ENCODE measurements at regions of chrX and their contacts with region 1.

Region 1: GRCh38 chrX:132022967-132023895 is at the start of gene STK26:
- DNase-seq: peak; percentile 82
- H3K4me3 ChIP-seq: peak within 1 kb of the TSS; percentile 98
- H3K27ac ChIP-seq: peak within 1 kb of the TSS; percentile 84
- H3K4me1 ChIP-seq: peaks cover 24% of the 10 kb centered on the region
- CTCF ChIP-seq: no peak
- total RNA-seq, gene STK26: 25.4 and 28.8 TPM in 2 replicates

Region 2: DNA sequence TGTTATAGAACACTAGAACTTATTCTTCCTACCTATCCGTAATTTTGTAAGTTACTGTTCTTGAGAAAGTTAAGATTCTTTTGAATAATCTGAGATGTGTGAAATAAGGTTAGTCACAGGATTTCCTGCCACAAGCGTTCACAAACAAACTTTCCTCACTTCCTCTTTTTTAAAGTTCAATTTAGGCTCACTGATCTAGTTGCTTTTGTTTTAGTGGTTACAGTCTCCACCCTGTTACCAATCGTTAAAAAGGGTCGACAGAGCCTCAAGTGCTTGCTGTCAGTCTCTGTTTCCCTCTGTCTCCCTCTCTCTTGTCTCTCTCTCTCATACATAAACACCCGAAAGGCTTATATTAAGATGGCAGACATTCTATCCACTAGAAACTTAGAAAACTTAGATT is 36.0 kb before region 1 on chrX:
- CTCF ChIA-PET with region 1: no interaction called
- POLR2A ChIA-PET with region 1: no interaction called
- intact Hi-C with region 1: loop called (anchors 1 kb)
- DNase-seq: peak; percentile 82
- H3K4me3 ChIP-seq: peak overlapping the region; percentile 31
- H3K27ac ChIP-seq: peak overlapping the region; percentile 71
- H3K4me1 ChIP-seq: peaks cover 20% of the 10 kb centered on the region
- CTCF ChIP-seq: no peak

Region 3: DNA sequence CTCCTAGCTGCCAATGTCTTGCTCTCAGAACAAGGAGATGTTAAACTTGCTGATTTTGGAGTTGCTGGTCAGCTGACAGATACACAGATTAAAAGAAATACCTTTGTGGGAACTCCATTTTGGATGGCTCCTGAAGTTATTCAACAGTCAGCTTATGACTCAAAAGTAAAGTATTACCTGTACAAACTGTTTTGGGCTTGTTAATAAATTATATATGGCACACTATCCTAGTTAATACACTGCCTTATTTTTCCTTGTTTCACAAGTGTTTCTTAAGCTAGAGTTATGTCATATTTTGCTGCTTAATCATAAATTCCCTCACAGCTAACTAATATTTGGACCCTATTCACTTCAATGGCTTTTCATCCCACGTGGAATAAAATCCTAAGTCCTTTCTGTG is 45.2 kb after region 1 on chrX:
- CTCF ChIA-PET with region 1: no interaction called
- POLR2A ChIA-PET with region 1: interaction called, 6 read pairs
- intact Hi-C with region 1: loop called (anchors 5 kb)
- DNase-seq: no peak
- H3K4me3 ChIP-seq: no peak overlapping the region
- H3K27ac ChIP-seq: no peak overlapping the region
- H3K4me1 ChIP-seq: no peaks in the 10 kb centered on the region
- CTCF ChIP-seq: no peak

Region 4: DNA sequence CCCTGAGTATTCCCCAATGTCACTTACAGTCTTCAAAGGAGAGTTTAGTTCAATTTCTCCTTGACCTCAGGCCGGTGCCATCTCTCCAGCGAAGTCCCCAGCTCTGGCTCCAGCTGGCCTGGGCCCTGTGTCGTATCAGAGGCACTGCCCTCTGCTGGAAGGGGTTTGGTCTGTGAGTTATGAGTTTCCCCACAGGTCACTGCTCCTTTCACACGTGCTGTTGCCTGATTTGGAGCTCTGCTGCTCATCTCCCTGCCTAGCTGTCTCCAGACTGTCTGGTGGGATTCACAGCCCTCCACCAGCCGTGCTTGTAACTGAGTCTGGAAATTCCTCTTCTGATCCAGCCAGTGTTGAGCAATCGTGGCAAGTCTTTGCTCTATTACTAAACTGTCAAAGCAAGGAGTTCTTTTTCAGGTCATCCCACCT is 196.1 kb after region 1 on chrX and contains the start of gene RAP2C:
- CTCF ChIA-PET with region 1: no interaction called
- POLR2A ChIA-PET with region 1: no interaction called
- intact Hi-C with region 1: loop called (anchors 2 kb)
- DNase-seq: peak; percentile 76
- H3K4me3 ChIP-seq: peak within 1 kb of the TSS; percentile 78
- H3K27ac ChIP-seq: peak within 1 kb of the TSS; percentile 66
- H3K4me1 ChIP-seq: peaks cover 15% of the 10 kb centered on the region
- CTCF ChIP-seq: peak; percentile 67
- total RNA-seq, gene RAP2C: 9.0 and 13.8 TPM in 2 replicates

Region 5: DNA sequence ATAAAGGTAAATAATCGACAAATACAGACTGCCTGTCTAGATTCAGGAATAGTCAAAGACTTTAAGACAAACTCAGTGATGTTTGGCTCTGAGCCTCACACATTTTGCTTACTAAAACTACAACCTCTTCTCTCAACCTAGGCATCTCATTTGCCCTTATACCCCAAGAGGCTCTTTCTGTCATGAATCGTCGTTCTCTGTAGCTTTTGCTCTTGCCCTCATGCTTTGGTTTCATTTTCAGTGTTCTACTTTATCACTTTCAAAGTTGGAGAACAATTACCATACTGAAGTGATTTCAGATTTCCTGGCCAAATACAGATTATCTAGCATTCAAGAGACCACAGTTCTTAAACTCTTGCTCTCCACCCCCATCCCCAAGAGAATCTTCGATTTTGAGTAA is 310.1 kb after region 1 on chrX:
- CTCF ChIA-PET with region 1: no interaction called
- POLR2A ChIA-PET with region 1: no interaction called
- intact Hi-C with region 1: no loop called
- DNase-seq: no peak
- H3K4me3 ChIP-seq: no peak overlapping the region
- H3K27ac ChIP-seq: no peak overlapping the region
- H3K4me1 ChIP-seq: no peaks in the 10 kb centered on the region
- CTCF ChIP-seq: no peak

Region 6: GRCh38 chrX:132488819-132489577 is 465.8 kb after region 1 on chrX and contains the start of gene MBNL3:
- CTCF ChIA-PET with region 1: no interaction called
- POLR2A ChIA-PET with region 1: no interaction called
- intact Hi-C with region 1: loop called (anchors 2 kb)
- DNase-seq: peak; percentile 90
- H3K4me3 ChIP-seq: peak within 1 kb of the TSS; percentile 78
- H3K27ac ChIP-seq: peak within 1 kb of the TSS; percentile 100
- H3K4me1 ChIP-seq: peaks cover 35% of the 10 kb centered on the region
- CTCF ChIP-seq: no peak
- total RNA-seq, gene MBNL3: 31.4 and 39.4 TPM in 2 replicates

Region 7: GRCh38 chrX:133045986-133046385 is 1022.8 kb after region 1 on chrX:
- CTCF ChIA-PET with region 1: no interaction called
- POLR2A ChIA-PET with region 1: no interaction called
- intact Hi-C with region 1: no loop called
- DNase-seq: no peak
- H3K4me3 ChIP-seq: no peak overlapping the region
- H3K27ac ChIP-seq: no peak overlapping the region
- H3K4me1 ChIP-seq: no peaks in the 10 kb centered on the region
- CTCF ChIP-seq: 0 out of 2 replicates have a peak, but pooled peaks have one; percentile 19

Measured in OCI-LY7 (cell line).